Activated CD4-positive, alpha-beta memory T cell treated with anti-CD3 and anti-CD28 coated beads, Interleukin-2, amount 10 ng/mL, durations not matched to agents 7 days and 5 days (primary cell): ENCODE measurements at regions of chr20 and their contacts with region 1.

Region 1: DNA sequence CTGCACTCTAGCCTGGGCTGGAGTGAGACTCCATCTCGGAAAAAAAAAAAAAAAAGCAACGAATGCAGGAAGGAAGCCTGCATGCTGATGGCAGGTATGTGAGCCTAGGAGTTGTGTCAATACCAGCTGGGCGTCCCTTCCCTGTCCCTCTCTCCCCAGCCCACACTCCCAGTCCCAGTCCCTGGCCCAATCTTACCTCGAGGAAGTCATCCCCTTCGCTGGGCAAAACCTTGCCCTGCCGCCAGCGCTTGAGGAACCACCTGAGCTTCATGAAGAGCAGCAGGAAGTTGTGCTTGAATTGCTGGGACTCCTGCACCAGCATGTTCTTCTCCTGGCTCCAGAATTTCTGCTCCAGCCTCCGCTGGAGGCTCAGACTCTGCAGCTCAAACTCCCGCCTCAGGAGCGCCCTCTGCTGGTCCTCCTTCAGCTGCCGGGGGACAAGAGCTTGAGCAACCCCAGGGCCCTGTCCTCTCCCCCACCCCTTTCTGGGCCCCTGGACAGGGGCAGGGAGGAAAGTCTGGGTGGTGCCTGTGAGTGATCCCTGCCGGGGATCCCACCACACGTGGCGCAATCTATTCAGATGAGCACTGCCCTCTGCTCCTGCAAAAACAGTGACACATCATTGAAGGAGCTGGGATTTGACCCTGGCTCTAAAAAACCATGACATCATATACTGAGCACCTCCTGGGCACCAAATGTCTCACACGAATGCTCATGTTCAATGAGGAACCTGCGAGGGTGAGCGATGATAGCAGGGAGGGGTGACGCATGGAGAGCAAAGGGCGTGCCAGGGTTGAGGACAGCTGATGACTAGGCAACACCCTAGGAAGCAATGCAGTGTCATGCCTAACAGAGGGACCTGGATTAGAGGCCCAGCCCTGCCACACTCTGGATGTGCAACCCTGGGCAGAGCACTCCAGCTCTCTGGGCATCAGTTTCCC is 35.0 kb upstream of the DSN1 start:
- DNase-seq: peak; percentile 80
- H3K4me3 Mint-ChIP-seq: no peak overlapping the region
- H3K27ac Mint-ChIP-seq: no peak overlapping the region
- H3K4me1 Mint-ChIP-seq: peaks cover 2% of the 10 kb centered on the region
- H3K27me3 Mint-ChIP-seq: no peaks in the 10 kb centered on the region

Region 2: GRCh38 chr20:36447101-36447500 is 361.5 kb before region 1 on chr20:
- CTCF ChIA-PET with region 1: no interaction called
- POLR2A ChIA-PET with region 1: no interaction called
- DNase-seq: no peak
- H3K4me3 Mint-ChIP-seq: no peak overlapping the region
- H3K27ac Mint-ChIP-seq: no peak overlapping the region
- H3K4me1 Mint-ChIP-seq: no peaks in the 10 kb centered on the region
- H3K27me3 Mint-ChIP-seq: peaks cover 1% of the 10 kb centered on the region

Region 3: DNA sequence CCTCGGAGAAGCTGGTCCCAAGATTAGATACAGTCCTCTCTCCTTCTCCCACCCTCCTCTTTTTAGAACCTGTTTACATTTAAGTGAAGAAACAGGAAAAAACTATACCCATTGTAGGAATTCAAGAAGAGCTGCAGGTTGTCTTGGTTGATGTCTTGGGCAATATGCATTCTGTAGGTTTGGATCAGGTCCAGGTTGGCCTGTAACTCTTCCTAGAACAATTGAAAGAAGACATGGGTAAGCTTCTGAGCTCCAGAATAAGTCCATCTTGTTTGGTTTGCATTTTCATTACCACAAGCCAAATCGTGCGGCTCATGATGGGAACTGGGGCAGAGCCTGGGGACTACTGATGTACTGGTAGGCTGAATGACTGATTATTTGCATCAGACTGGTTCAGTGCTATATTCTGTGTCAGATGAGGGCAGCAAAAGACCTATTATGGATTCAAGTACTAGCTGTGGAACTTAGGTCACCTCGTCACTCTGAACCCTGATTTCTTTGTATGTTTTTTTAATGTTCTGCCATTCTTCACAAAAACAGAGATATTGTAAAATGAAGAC is 142.3 kb before region 1 on chr20:
- CTCF ChIA-PET with region 1: interaction called, 12 read pairs
- POLR2A ChIA-PET with region 1: no interaction called
- DNase-seq: no peak
- H3K4me3 Mint-ChIP-seq: no peak overlapping the region
- H3K27ac Mint-ChIP-seq: no peak overlapping the region
- H3K4me1 Mint-ChIP-seq: no peaks in the 10 kb centered on the region
- H3K27me3 Mint-ChIP-seq: no peaks in the 10 kb centered on the region

Region 4: DNA sequence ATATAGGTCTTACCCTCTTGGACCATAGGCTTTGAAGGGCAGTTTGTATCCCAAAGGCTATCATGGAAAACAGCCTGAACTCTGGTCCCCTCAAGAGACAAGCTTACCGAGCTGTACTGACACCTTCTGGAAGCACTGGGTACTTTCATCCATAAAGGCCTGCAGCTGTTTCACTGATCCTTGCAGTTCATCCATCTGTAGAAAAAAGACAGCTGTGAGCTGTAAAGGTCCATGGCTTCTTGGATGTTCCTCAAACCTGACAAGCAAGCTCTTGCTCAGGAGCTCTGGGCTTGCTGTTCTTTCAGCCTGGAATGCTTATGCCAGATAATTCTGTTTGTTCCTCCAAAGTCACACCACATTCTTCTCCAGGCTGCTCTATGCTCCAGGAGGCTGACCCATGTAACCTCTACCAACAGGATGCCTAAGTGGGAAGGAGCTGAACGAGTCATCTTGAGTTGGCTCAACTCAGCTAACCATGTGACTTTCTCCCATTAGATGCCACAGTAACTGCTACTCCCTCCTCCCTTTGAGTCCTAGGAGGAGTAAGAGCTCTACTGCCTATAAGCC is 53.8 kb before region 1 on chr20:
- CTCF ChIA-PET with region 1: interaction called, 12 read pairs
- POLR2A ChIA-PET with region 1: no interaction called
- DNase-seq: peak; percentile 47
- H3K4me3 Mint-ChIP-seq: no peak overlapping the region
- H3K27ac Mint-ChIP-seq: no peak overlapping the region
- H3K4me1 Mint-ChIP-seq: peaks cover 15% of the 10 kb centered on the region
- H3K27me3 Mint-ChIP-seq: no peaks in the 10 kb centered on the region

Region 5: DNA sequence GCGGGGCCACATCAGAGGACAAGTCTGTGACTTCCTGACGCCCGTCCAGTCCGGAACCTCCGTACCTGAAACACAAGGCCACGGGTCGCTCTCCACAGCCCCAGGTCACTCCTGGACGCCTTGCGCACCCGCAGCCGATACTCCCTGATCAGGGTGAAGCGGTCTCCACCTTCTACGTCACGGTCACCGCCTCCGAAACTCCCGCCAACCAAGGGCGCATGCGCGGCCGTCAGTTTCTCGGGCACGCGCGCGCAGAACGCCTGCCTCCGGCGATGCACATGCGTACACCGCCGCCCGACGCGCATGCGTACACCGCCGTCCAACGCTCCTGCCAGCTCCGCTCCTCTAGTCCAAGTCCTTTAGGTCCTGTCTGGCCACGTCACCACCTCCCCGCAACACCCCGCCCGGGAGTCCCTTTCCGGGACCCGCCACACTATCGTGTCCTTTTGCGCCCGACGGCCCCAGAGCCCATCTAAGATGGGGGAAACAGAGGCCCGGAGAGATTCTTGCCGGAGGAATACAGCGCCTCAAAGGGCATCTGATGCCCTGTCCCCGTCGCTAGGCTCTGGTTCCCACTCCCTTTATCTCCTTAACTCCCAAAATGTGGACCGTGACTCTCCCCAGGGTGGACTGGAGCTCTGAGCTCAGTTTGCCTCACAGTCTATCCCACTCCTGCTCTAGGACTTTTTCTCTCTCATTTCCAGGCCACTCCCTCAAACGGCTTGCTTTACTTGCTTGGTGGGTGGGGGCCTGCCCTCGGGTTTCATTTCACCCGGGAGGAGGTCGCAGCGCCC is 34.8 kb before region 1 on chr20 and contains the start of gene DSN1:
- CTCF ChIA-PET with region 1: interaction called, 12 read pairs
- POLR2A ChIA-PET with region 1: interaction called, 5 read pairs
- DNase-seq: peak; percentile 99
- H3K4me3 Mint-ChIP-seq: peak within 1 kb of the TSS; percentile 91
- H3K27ac Mint-ChIP-seq: peak within 1 kb of the TSS; percentile 85
- H3K4me1 Mint-ChIP-seq: peaks cover 42% of the 10 kb centered on the region
- H3K27me3 Mint-ChIP-seq: peaks cover 2% of the 10 kb centered on the region
- total RNA-seq, gene DSN1: 31.9 to 32.0 TPM

Region 6: DNA sequence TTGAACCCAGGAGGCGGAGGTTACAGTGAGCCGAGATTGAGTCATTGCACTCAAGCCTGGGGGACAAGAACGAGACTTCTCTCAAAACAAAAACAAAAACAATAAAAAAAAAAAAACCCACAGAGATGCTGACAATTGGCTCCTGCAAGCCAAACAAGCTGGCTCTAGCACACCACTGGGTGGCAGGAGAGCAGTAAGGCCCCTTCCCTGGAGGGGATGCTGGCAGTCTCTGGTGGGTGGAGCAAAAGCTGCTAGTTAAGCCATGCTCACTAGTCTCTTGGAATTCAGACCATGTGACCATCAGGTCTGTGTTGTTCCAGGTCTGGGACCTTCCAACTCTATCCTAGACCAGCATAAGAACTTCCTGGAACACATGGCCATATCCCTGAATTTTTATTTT is 16.2 kb before region 1 on chr20:
- CTCF ChIA-PET with region 1: interaction called, 14 read pairs
- POLR2A ChIA-PET with region 1: no interaction called
- DNase-seq: no peak
- H3K4me3 Mint-ChIP-seq: no peak overlapping the region
- H3K27ac Mint-ChIP-seq: no peak overlapping the region
- H3K4me1 Mint-ChIP-seq: no peaks in the 10 kb centered on the region
- H3K27me3 Mint-ChIP-seq: no peaks in the 10 kb centered on the region

Region 7: GRCh38 chr20:36819659-36820058 is 11.1 kb after region 1 on chr20:
- CTCF ChIA-PET with region 1: interaction called, 11 read pairs
- POLR2A ChIA-PET with region 1: no interaction called
- DNase-seq: no peak
- H3K4me3 Mint-ChIP-seq: no peak overlapping the region
- H3K27ac Mint-ChIP-seq: no peak overlapping the region
- H3K4me1 Mint-ChIP-seq: no peaks in the 10 kb centered on the region
- H3K27me3 Mint-ChIP-seq: peaks cover 7% of the 10 kb centered on the region

Region 8: DNA sequence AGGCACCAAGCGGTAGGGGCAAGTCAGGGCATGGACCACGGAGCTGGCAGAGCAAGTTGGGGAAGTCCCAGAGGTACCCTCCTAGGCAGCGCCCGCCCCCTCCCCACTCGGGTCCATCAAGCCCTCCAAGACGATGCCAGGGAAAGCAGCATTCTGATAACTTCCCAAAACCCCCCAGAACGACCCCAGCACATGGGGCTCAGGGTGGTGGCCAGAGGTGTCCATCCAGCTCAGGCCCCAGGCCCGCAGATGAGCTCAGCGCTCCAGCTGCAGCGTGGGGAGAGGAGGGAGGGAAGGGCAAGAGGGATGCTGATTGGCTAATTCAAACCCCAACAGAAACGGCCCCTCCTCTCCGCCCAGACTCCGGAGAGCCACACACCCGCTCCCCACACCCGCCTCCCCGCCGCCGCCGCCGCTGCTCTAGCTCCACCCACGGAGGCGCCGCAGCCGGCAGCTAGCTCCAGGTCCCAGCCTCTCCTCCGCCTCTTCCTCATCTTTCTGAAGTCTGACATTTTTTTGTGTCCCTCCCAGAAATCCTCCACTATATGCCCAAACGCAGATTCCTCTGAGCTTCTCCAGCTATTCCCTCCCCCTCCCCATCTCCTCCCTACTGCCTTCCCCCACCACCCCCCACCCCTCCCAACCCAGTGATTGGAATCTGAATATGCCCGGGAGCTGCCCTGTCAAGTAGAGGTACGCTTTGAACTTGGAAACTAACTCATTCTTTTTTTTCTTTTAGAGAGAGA is 27.0 kb after region 1 on chr20:
- CTCF ChIA-PET with region 1: interaction called, 33 read pairs
- POLR2A ChIA-PET with region 1: no interaction called
- DNase-seq: peak; percentile 92
- H3K4me3 Mint-ChIP-seq: peak overlapping the region; percentile 82
- H3K27ac Mint-ChIP-seq: peak overlapping the region; percentile 87
- H3K4me1 Mint-ChIP-seq: peaks cover 27% of the 10 kb centered on the region
- H3K27me3 Mint-ChIP-seq: no peaks in the 10 kb centered on the region

Region 9: GRCh38 chr20:37020636-37021035 is 212.0 kb after region 1 on chr20:
- CTCF ChIA-PET with region 1: no interaction called
- POLR2A ChIA-PET with region 1: no interaction called
- DNase-seq: no peak
- H3K4me3 Mint-ChIP-seq: no peak overlapping the region
- H3K27ac Mint-ChIP-seq: no peak overlapping the region
- H3K4me1 Mint-ChIP-seq: peaks cover 27% of the 10 kb centered on the region
- H3K27me3 Mint-ChIP-seq: no peaks in the 10 kb centered on the region